Body of pancreas (tissue), 4 donors: ENCODE measurements at regions of chr5 and their contacts with region 1.

Region 1: GRCh38 chr5:151451626-151452520 is 4.5 kb downstream of the SLC36A1 start:
- DNase-seq: no peak
- ATAC-seq: no peak
- H3K4me3 ChIP-seq: no peak overlapping the region
- H3K27ac ChIP-seq: no peak overlapping the region
- H3K4me1 ChIP-seq: peaks cover 16% of the 10 kb centered on the region
- H3K27me3 ChIP-seq: no peaks in the 10 kb centered on the region
- CTCF ChIP-seq: no peak
- POLR2A ChIP-seq: no peak

Region 2: DNA sequence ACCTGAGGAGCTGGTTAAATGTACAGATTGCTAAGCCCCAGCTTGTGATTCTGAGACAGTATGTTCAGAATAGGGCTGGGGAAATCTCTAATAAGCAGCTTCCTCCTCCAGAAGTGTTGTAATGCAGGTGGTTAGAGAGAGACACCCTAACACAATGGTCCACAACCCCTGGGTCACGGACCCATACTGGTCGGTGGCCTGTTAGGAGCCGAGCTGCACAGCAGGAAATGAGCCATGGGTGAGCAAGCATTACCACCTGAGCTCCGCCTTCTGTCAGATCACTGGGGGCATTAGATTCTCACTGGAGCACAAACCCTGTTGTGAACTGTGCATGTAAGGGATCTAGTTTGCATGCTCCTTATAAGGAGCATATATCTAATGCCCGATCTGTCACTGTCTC is 57.4 kb after region 1 on chr5:
- intact Hi-C with region 1: loop called (anchors 10 kb)
- DNase-seq: no peak
- ATAC-seq: no peak
- H3K4me3 ChIP-seq: no peak overlapping the region
- H3K27ac ChIP-seq: no peak overlapping the region
- H3K4me1 ChIP-seq: no peaks in the 10 kb centered on the region
- H3K27me3 ChIP-seq: no peaks in the 10 kb centered on the region
- CTCF ChIP-seq: no peak
- POLR2A ChIP-seq: no peak

Region 3: GRCh38 chr5:151647320-151647861 is 195.5 kb after region 1 on chr5:
- intact Hi-C with region 1: loop called (anchors 10 kb)
- DNase-seq: no peak
- ATAC-seq: no peak
- H3K4me3 ChIP-seq: no peak overlapping the region
- H3K27ac ChIP-seq: no peak overlapping the region
- H3K4me1 ChIP-seq: no peaks in the 10 kb centered on the region
- H3K27me3 ChIP-seq: no peaks in the 10 kb centered on the region
- CTCF ChIP-seq: no peak
- POLR2A ChIP-seq: no peak